Activated CD4-positive, alpha-beta T cell treated with anti-CD3 and anti-CD28 coated beads, Interleukin-2, amount 10 ng/mL, durations not matched to agents 7 days and 5 days (primary cell): ENCODE measurements at regions of chr1 and their contacts with region 1.

Region 1: DNA sequence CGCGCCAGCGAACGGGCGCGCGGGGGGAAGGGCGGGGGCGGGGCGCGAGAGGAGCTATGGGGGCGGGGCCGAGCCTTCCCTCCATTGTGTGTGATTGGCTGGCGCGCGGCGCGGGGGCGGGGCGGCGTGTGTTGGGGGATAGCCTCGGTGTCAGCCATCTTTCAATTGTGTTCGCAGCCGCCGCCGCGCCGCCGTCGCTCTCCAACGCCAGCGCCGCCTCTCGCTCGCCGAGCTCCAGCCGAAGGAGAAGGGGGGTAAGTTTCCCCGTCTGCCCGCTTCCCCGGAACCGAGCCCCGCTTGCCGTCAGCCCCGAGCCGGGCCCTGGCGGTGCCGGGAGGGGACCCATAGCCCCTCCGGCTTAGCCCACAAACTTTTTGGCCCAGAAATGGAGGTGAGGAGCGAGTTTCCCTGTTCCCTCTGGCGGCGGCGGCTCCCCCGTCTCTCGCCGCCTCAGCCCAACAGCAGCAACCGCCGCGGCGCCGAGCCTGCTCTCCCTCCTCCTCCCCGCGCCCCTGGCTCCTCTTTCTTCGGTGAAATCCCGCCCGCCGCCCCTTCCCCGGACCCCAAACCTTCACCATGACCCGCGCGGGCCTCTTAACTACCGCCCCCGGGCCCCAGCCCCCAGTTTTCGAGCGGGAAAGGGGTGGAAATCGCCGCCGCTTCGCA is at the start of gene H3-3A:
- DNase-seq: peak; percentile 97
- H3K4me3 Mint-ChIP-seq: peak within 1 kb of the TSS; percentile 100
- H3K27ac Mint-ChIP-seq: peak within 1 kb of the TSS; percentile 100
- H3K4me1 Mint-ChIP-seq: peaks cover 42% of the 10 kb centered on the region
- H3K27me3 Mint-ChIP-seq: no peaks in the 10 kb centered on the region
- total RNA-seq, gene H3-3A: 651 to 657 TPM

Region 2: DNA sequence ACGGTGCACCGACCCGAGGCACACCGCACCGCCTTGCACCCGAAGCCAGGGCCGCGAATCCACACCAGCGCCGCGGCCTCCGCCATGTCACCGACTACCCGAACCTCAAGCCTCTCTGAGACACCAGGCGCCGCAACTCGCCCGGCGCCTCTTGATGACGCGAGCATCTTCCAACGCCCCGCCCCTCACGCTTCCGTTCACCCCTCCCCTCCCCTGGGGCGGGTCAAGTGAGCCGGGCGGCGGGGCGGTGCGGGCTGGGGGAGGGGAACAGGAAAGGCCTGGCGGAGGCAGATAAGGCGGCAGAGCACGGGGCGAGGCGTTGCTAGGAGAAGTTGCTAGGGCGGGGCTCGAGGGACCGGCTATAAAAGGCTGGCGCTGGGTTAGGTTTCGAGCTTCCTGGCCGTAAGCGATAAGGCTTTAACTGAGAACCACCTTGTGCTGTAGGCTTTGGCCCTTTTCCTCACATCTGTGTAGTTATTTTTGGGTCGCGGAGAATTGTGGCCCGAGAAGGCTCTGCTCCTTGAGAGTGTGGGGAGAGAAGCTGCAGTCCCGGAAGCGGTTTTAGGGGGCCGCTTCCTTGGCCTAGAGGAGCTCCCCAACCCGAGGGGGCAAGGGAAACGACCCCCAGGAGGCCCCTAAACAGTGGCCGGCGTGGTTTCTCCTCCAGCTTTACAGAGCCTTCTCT is 63.3 kb before region 1 on chr1 and contains the start of gene SDE2:
- CTCF ChIA-PET with region 1: interaction called, 5 read pairs
- POLR2A ChIA-PET with region 1: interaction called, 25 read pairs
- DNase-seq: peak; percentile 100
- H3K4me3 Mint-ChIP-seq: peak within 1 kb of the TSS; percentile 99
- H3K27ac Mint-ChIP-seq: peak within 1 kb of the TSS; percentile 100
- H3K4me1 Mint-ChIP-seq: peaks cover 81% of the 10 kb centered on the region
- H3K27me3 Mint-ChIP-seq: no peaks in the 10 kb centered on the region
- total RNA-seq, gene SDE2: 16.1 to 16.6 TPM

Region 3: GRCh38 chr1:226074046-226074445 is 11.4 kb after region 1 on chr1:
- CTCF ChIA-PET with region 1: interaction called, 11 read pairs
- POLR2A ChIA-PET with region 1: interaction called, 3 read pairs
- DNase-seq: no peak
- H3K4me3 Mint-ChIP-seq: no peak overlapping the region
- H3K27ac Mint-ChIP-seq: no peak overlapping the region
- H3K4me1 Mint-ChIP-seq: peaks cover 11% of the 10 kb centered on the region
- H3K27me3 Mint-ChIP-seq: no peaks in the 10 kb centered on the region

Region 4: DNA sequence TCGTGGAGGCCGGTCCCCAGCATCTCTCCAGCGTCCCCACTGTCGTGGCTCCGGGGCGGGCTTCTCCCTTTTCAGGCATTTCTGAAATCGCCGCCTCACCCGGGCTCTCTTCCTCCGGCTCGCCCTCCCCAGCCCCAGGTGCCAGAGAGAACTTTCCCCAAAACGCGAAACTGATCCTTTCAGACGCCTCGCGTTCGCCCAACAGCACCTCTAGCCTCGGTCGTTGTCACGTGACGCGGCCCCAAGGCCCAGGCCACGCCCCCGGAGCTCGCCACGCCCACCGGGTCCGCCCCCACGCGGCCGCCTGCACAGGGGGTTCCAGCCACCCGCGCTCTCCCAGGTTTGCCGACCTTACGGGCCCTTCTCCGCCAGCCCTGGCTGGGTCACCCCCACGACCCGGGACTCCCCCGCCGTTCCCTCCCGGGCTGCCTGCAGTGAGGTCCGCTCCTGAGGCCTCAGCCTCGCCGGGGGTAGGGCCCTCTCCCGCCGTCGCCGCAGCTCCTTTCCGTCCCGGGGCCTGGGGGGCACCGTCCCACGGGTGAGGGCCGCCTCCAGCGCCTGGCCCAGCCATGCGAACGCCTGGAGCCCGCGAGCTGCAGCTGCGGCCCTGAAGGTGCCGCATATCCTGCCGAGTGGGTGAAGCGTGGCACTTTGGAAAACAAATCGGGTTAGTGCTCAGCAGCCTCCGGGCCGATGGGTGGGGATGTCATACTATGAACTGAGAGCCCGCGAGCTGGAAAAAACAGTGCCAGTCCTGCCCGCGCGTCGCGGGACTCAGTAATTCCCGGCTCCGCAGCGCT is 20.8 kb after region 1 on chr1:
- CTCF ChIA-PET with region 1: interaction called, 18 read pairs
- POLR2A ChIA-PET with region 1: no interaction called
- DNase-seq: peak; percentile 89
- H3K4me3 Mint-ChIP-seq: peak overlapping the region; percentile 86
- H3K27ac Mint-ChIP-seq: peak overlapping the region; percentile 87
- H3K4me1 Mint-ChIP-seq: peaks cover 9% of the 10 kb centered on the region
- H3K27me3 Mint-ChIP-seq: peaks cover 2% of the 10 kb centered on the region

Region 5: DNA sequence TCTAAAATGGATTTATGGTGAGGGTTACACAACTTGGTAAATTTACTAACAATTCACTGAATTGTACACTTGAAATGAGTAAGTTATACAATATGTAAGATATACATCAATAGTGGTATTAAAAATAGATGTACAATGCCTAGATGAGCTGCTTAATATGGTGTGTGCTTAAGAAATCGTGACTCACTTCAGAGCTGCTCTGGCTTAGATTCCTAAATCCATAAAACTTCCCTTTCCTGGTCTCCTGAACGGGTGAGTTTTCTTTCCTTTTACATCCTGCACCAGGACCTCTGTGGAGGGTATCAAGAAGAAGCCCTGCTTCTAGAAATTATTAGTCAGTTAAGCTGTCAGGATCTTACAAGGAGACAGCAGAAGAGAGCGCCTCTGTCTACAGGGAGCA is 30.3 kb after region 1 on chr1:
- CTCF ChIA-PET with region 1: interaction called, 22 read pairs
- POLR2A ChIA-PET with region 1: interaction called, 3 read pairs
- DNase-seq: no peak
- H3K4me3 Mint-ChIP-seq: no peak overlapping the region
- H3K27ac Mint-ChIP-seq: no peak overlapping the region
- H3K4me1 Mint-ChIP-seq: no peaks in the 10 kb centered on the region
- H3K27me3 Mint-ChIP-seq: peaks cover 7% of the 10 kb centered on the region